BJ (cell line): ENCODE measurements at regions of chr11 and their contacts with region 1.

Region 1: DNA sequence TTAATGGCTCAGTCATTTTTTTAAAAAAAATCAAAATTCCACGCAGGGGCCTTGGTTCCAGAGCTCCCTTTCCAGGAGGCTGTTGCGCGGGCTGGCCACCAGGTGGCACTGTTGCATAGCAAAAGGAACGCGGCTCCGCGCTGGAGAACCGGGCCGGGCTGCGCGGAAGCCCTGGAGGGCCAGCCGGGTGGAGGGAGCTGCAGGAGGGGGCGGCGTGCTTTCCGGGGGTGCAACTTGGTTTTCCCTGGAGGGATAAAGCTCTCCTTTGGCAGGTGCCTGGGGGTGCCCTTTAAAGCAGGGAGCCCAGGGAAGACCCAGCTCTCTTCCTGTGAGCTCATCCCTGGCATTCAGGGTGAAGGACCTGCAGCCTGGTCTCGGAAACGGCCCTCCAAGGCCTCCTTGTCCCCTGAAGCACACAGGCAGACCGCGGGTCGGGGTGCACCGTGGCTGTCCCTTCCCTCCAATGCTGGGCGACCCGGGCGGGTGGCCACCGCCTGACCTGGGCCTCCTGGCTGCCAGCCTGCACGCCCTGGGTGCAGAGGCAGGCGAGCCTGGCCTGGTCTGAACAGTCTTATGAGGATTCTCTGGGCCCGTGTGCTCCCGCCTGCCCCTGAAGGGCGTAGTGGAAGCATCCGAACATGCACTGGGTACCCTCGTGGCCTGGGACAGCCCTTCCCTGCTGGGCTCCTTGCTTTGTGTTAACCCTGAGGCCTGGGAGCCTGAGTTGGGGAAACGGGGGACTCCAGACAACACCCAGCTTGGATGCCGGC is 23.4 kb downstream of the KRTAP5-5 start:
- DNase-seq: no peak
- H3K4me3 ChIP-seq: no peak overlapping the region
- H3K27me3 ChIP-seq: peaks cover 6% of the 10 kb centered on the region
- CTCF ChIP-seq: peak; percentile 96

Region 2: GRCh38 chr11:1628506-1629325 is 24.2 kb before region 1 on chr11:
- CTCF ChIA-PET with region 1: interaction called, 10 read pairs
- POLR2A ChIA-PET with region 1: no interaction called
- DNase-seq: no peak
- H3K4me3 ChIP-seq: no peak overlapping the region
- H3K27me3 ChIP-seq: peaks cover 20% of the 10 kb centered on the region
- CTCF ChIP-seq: peak; percentile 94

Region 3: GRCh38 chr11:1682225-1682905 is 29.4 kb after region 1 on chr11:
- CTCF ChIA-PET with region 1: interaction called, 10 read pairs
- POLR2A ChIA-PET with region 1: no interaction called
- DNase-seq: no peak
- H3K4me3 ChIP-seq: no peak overlapping the region
- H3K27me3 ChIP-seq: no peaks in the 10 kb centered on the region
- CTCF ChIP-seq: no peak

Region 4: DNA sequence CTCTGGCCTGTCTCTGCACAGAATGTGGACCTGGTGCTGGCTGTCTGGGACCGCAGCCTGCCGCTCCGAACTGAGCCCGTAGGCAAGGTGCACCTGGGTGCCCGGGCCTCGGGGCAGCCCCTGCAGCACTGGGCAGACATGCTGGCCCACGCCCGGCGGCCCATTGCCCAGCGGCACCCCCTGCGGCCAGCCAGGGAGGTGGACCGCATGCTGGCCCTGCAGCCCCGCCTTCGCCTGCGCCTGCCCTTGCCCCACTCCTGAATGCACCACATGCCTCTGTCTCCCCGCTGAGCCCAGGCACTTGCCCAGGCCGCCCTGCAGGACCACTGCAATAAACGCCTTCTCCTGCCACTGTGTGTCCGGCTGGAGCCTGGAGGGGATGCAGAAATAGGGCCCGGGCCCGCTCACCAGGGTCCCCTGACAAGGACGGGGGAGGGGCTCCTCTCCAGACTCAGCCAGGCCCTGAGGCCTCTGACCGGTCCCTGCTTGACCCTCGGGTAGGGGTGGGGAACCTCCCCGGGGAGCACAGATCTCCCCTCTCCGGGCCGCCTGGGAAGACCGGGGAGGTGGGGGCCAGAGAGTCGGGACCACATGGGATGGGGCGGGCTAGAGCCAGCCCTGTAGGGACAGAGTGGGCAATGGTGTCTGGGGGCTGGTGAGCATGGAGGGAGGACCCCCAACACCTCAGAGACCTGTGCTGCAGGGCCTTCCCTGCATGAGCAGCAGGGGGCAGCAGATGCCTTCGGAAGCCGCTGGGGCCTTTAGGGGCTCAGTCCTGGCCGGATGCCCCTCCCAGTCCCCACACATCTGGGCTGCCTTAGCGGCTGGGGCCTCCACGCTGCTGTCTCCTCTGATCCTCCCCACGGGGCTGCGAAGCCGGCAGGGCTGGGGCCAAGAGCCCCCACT is 184.5 kb after region 1 on chr11:
- CTCF ChIA-PET with region 1: interaction called, 67 read pairs
- POLR2A ChIA-PET with region 1: no interaction called
- DNase-seq: no peak
- H3K4me3 ChIP-seq: no peak overlapping the region
- H3K27me3 ChIP-seq: no peaks in the 10 kb centered on the region; the same call in 1 of the 2 replicates
- CTCF ChIP-seq: peak; percentile 93

Region 5: DNA sequence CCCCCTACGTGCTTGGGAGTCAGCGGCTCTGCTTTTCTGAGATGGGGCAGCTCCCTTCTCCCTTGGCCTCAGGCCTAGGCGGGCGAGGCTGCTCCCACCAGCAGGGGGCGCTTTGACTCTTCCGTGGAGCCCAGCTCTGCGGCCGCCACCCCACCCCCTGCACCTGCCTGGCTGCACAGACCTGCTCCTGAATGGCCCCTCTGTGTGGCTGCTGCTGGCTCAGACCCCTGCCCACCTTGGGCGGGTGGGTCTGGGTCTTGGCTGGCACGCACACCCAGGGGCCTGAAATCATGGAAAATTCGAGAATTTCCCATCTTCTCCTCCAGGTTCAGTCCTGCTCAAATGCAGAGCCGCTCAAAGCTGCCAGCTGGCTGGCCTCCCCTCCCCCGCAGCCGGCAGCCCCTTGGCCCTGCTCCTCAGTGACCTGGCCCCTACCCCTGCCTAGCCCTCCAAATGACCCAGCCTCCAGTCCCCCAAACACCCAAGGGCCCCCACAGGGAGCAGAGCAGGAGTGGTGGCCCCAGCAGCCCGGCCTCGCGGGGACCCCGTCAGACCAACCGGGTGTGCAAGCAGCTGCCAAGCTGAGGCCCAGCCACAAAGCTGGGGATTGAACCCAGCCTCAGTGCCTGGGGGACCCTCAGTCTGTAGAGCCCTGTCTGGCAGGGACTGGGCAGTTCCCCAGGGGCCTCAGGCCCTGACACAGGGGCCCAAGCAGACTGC is 229.7 kb after region 1 on chr11:
- CTCF ChIA-PET with region 1: interaction called, 16 read pairs
- POLR2A ChIA-PET with region 1: no interaction called
- DNase-seq: no peak
- H3K4me3 ChIP-seq: no peak overlapping the region
- H3K27me3 ChIP-seq: no peaks in the 10 kb centered on the region; the same call in none of the 2 replicates
- CTCF ChIP-seq: peak; percentile 94